Common myeloid progenitor, CD34-positive (primary cell): ENCODE measurements at regions of chr10 and their contacts with region 1.

Region 1: DNA sequence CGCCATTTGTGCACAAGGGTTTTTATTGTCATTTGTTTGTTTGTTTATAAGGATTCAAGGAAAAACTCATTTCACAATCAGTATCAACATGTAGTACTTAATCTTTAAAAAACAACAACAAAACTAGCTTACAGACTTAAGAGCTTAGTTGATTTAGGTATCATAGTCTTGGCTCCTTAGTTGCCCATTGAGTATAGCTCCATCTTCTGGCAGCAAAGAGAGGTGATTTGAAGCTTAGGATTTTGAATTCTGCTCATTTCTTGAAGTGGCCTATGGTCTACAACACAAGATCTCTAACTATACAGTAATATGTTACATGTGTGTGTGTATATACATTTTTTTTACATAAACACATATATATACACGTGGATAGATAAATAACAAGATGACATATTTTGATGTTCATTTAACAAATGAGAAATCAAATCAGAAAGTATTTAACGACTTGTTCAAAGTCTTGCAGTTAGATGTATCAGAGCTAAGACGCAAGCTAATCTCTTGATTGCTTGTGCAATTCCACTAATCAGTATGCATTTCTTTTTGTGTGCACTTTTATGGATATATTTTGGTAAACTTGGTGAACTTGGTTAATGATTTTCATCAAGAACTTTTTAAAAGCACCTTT is 307.3 kb downstream of the CAMK1D start:
- DNase-seq: peak; percentile 66 to 84 (median 83)
- H3K4me3 ChIP-seq: no peak overlapping the region
- H3K27ac ChIP-seq: no peak overlapping the region
- H3K4me1 ChIP-seq: no peaks in the 10 kb centered on the region
- H3K27me3 ChIP-seq: no peaks in the 10 kb centered on the region

Region 2: DNA sequence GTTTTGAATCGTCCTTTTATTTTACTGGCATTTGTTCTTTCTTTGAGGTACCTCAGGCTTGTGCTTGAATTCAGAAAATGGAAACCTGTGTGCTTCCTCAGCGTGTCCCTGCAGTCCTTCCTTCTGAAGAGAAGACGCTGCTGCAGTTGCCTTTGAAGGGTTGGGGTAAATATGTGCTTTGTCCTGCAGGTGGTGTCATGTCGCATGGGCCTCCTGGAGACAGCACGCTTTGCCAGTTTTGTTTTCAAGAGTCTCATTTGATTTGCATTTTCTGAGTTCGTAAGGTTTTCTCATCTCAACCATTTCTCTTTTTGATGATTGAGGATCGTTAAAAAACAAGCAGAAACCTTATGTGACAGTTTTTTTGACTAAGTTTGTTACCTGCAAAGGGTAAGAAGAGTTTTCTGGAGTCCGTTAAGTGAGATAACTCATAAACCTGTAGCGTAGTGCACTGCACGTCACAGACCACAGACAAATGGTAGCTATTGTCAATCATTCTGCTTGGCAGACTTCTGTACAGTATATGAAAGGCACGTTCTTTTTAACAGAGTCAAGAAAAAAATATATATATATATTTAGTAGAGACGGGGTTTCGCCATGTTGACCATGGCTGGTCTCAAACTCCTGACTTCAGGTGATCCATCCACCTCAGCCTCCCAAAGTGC is 403.6 kb before region 1 on chr10:
- CTCF ChIA-PET with region 1: interaction called, 10 read pairs
- POLR2A ChIA-PET with region 1: no interaction called
- DNase-seq: peak; percentile 58 to 75 (median 73)
- H3K4me3 ChIP-seq: no peak overlapping the region
- H3K27ac ChIP-seq: no peak overlapping the region
- H3K4me1 ChIP-seq: no peaks in the 10 kb centered on the region
- H3K27me3 ChIP-seq: no peaks in the 10 kb centered on the region

Region 3: DNA sequence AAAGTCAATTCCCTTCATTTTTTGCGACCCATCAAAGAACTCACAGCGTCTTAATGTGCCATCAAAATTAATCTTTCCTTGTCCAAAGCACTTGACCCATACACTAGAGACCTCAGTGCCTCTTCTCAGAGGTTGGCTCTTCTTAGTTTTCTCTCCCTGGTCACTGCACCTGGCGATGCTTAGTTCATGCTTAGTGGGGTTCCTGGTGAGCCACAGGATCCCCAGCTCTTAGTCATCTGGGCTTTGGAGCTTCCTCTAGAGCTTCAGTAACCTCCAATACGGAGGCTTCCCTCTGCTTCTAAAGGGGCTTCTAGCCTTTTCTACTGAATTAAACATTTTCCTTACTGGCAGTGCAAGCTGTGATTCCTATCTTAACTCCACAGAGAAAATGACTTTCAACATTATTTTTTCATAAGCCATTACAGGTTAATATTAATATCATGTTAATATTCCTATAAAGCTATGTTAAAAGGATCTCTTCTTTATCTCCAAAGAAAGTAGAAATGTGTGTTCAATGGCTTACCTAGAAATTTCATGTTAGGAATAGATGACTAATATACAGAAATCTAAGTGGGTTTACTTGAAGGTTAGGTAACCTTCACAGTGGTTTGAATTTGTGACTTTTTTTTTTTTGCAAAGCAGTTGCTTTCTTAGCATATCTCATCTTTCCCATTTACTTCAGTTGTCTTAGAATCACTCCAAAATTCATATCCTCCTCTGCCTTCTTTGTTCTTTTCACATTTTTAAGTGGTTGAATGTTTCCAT is 12.1 kb before region 1 on chr10:
- CTCF ChIA-PET with region 1: interaction called, 17 read pairs
- POLR2A ChIA-PET with region 1: no interaction called
- DNase-seq: peak in 2 of 3 donors; percentile 14 to 20
- H3K4me3 ChIP-seq: no peak overlapping the region
- H3K27ac ChIP-seq: no peak overlapping the region
- H3K4me1 ChIP-seq: peaks cover 0 to 4% (median 0%) of the 10 kb centered on the region in 4 experiments
- H3K27me3 ChIP-seq: no peaks in the 10 kb centered on the region